Dorsolateral prefrontal cortex (tissue), 120 donors: ENCODE measurements at regions of chr4 and their contacts with region 1.

Region 1: GRCh38 chr4:57168982-57169381 is 58.8 kb upstream of the IGFBP7 start:
- DNase-seq: no peak
- H3K4me3 ChIP-seq: no peak overlapping the region
- H3K27ac ChIP-seq: no peak overlapping the region
- H3K27me3 ChIP-seq: no peaks in the 10 kb centered on the region
- CTCF ChIP-seq: no peak

Region 2: GRCh38 chr4:57053508-57053907 is 115.5 kb before region 1 on chr4:
- intact Hi-C with region 1: no loop called
- DNase-seq: no peak
- H3K4me3 ChIP-seq: no peak overlapping the region
- H3K27ac ChIP-seq: no peak overlapping the region
- H3K27me3 ChIP-seq: peaks cover 0 to 8% (median 0%) of the 10 kb centered on the region in 45 donors
- CTCF ChIP-seq: no peak

Region 3: DNA sequence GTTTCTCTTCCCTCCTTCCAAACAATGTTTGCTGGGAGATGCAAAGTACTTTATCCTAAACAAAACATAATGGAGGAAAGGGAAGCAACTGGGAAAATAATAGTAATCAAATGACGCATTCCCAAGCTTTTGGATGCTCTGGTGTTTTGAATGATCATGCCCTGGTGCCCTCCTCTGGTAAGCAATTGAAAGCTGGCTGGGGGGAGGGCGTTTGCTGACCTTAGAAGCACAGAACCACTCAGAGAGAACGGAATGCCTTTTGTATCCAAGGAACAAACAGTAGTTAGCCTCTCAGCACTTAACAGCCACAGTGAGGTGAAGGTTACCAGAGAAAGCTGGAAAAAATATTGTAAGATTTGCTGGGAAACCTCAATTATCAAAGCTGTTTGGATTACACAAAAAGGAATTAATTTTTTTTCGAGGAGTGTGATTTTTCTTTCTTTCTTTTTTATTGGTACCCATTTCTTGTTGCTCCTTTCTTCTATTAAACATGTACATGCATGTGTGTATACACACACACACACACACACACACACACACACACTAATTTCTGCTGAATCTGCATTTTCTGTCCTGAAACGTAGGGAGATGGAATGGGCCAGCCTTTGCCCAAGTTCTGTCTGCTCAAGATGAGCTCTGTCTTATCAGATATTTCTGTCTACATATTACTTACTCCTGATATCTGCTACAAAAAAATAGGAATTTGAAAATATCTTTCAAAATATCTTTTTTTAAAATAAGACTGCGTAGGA is 97.0 kb after region 1 on chr4:
- intact Hi-C with region 1: loop called in 1 of 2 experiments (anchors 5 kb)
- DNase-seq: peak in 2 of 10 donors; percentile 8 to 22
- H3K4me3 ChIP-seq: no peak overlapping the region
- H3K27ac ChIP-seq: no peak overlapping the region
- H3K27me3 ChIP-seq: no peaks in the 10 kb centered on the region
- CTCF ChIP-seq: peak in 26 of 56 donors; percentile 8 to 53 (median 24)

Region 4: GRCh38 chr4:57410331-57411052 is 241.5 kb after region 1 on chr4:
- intact Hi-C with region 1: loop called in 1 of 2 experiments (anchors 5 kb)
- DNase-seq: peak in 5 of 10 donors; percentile 14 to 67 (median 50)
- H3K4me3 ChIP-seq: peak overlapping the region in 1 of 59 donors; percentile 31
- H3K27ac ChIP-seq: peak overlapping the region in 52 of 59 donors; percentile 0 to 90 (median 68)
- H3K27me3 ChIP-seq: no peaks in the 10 kb centered on the region
- CTCF ChIP-seq: peak in 4 of 56 donors; percentile 8 to 15 (median 10)

Region 5: GRCh38 chr4:57575426-57575825 is 406.4 kb after region 1 on chr4:
- intact Hi-C with region 1: no loop called
- DNase-seq: no peak
- H3K4me3 ChIP-seq: no peak overlapping the region
- H3K27ac ChIP-seq: no peak overlapping the region
- H3K27me3 ChIP-seq: no peaks in the 10 kb centered on the region
- CTCF ChIP-seq: no peak